RWPE1 (cell line): ENCODE measurements at regions of chr2 and their contacts with region 1.

Region 1: DNA sequence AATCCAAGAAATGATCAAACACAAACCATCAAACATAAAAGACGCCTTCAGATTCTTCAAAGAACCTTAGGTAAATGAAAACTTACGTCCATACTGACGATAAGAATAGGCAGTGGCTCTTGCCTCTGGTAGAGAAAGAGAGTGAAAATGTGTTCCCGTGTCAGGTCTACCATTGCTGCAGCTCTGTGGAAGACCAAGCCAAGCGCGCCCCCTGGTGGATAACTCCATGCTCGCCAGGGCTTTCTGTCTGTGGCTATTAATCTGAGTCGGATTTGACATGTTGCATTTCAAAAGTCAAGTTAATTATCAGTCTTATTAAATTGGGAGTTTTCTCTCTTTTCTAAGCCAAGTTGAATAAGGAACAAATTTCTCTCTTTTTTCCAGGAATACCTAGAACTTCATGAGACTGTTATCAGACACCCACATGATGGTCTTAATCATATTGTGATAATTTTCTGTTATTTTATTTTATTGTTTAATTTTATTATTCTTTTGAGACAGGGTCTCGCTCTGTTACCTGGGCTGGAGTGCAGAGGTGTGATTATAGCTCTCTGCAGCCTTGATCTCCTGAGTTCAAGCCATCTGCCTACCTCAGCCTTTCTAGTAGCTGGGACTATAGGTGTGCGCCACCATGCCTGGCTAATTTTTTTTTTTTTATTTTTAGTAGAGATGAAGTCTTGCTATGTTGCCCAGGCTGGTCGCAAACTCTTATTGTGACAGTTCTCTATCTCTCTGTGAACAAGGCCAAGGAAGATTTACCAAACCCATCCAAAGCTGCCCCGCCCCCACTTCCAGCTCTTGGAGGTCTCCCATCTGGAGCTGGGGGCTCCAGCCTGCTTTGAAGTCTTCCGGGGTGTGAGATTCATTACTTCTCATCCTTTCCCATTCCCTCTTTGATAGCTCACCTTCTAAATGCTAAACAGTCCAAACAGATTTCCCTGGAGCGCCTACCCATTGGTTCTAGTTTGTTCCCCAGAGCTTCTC is 15.8 kb upstream of the ZAP70 start:
- DNase-seq: peak; percentile 69
- H3K27ac ChIP-seq: no peak overlapping the region
- CTCF ChIP-seq: peak; percentile 92

Region 2: DNA sequence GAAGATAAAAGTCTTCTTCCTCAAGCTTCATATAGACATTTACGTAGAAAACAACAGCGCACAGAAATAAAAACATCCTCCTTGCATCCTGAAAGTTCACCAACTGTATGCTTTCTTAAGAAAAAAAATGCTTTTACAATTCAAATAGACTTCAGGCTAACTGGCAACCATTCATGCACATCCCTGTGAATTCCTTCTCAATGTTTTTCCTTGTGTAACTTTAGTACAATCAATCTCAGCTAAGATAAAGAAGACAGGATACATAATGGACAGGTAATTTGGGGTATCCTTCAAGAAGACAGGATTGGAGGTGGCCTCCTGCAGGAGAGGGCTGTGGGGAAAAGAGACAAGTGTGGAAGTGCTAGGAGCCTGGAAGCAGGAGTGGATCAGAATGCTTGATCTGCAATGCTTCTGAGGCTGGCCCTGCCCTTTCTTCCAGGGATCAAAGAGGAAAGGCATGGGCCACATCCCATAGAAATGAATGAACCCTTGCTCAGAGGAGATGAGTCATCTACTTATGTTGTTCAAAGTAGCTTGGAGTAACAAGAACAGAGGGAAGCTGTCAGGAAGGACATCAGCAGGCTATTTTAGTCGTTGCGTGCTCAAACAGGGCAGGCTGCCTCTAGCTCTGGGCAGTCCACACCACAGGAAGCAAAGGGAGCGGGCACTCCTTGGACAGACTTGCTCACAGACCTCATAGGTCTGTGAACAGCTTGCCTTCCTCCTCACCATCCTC is 171.6 kb after region 1 on chr2:
- CTCF ChIA-PET with region 1: no interaction called
- POLR2A ChIA-PET with region 1: no interaction called
- DNase-seq: peak; percentile 86
- H3K27ac ChIP-seq: peak overlapping the region; percentile 73
- CTCF ChIP-seq: no peak

Region 3: DNA sequence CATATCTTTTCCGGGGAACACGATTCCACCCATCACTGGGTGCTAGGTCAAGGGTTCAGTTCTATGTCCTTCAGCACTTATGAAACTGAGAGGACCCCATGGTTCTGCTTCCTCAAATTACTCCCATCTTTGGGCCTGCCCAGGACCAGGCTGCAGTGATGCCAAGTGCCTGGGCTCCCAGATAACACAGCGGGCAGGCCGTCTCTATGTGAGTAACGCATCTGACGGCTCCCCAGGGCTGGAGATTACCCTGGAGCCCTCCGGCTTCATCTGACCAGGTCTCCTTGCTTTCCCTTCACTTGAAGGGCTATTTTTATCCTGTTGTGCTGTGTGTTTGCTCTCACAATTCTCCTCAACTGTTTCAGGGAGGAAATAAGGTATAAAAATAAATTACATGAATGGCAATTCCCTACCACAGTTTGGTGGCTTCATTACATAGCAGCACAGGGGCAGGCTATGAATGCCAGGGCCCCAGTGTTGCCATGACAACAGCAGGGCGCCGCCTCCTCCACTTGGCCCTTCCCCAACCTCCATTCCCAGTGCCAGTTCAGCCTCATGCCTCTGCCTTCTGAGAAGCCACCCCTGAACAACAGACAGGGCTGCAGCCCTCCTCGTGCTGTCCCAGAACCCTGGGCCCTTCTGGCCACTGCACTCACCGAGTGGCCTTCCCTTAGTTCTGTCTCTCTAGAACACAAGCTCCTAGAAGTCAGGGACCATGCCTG is 323.6 kb after region 1 on chr2:
- CTCF ChIA-PET with region 1: no interaction called
- POLR2A ChIA-PET with region 1: no interaction called
- DNase-seq: no peak
- H3K27ac ChIP-seq: no peak overlapping the region
- CTCF ChIP-seq: no peak

Region 4: GRCh38 chr2:98385050-98385699 is 687.6 kb after region 1 on chr2:
- CTCF ChIA-PET with region 1: interaction called, 13 read pairs
- POLR2A ChIA-PET with region 1: no interaction called
- DNase-seq: peak; percentile 82
- H3K27ac ChIP-seq: no peak overlapping the region
- CTCF ChIP-seq: peak; percentile 94